ENCODE measurements at regions of chr7 and their contacts with region 1.

Region 1: GRCh38 chr7:112495810-112496462 is 15.1 kb downstream of the LSMEM1 start:
- DNase-seq: no peak
- H3K4me3 ChIP-seq: no peak overlapping the region
- CTCF ChIP-seq: peak; percentile 49

Region 2: GRCh38 chr7:111741811-111742240 is 754.1 kb before region 1 on chr7:
- CTCF ChIA-PET with region 1: interaction called, 50 read pairs
- POLR2A ChIA-PET with region 1: no interaction called
- DNase-seq: no peak
- H3K4me3 ChIP-seq: no peak overlapping the region
- CTCF ChIP-seq: peak; percentile 62

Region 3: DNA sequence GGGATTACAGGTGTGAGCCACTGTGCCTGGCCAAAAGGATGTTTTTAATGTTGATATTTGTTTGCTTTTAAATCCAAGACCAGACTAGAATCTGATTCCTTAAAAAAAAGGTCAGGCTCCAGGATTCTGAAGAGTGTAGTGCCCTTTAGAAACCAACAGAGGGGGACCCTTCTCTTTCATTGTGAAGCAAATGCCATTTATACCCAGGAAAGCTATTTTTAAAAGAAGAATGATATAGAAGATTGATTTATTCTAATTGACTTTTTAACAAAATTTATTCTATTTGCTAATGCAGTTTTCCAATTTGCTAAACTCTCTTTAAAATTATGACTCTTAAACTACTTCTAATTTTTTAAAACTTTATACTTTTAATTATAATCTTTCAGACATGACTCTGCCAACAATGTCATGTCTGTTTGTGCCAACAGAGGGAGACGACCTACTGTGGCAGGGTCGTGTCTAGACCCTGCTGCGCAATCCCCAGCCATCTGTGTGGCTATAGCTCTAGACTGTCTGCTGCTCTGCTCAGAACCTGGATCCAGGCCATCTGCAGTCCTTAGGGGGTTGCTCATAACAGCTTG is 732.6 kb before region 1 on chr7:
- CTCF ChIA-PET with region 1: interaction called, 17 read pairs
- POLR2A ChIA-PET with region 1: no interaction called
- DNase-seq: no peak
- H3K4me3 ChIP-seq: no peak overlapping the region
- CTCF ChIP-seq: peak; percentile 68

Region 4: GRCh38 chr7:112462236-112462635 is 33.7 kb before region 1 on chr7:
- CTCF ChIA-PET with region 1: interaction called, 10 read pairs
- POLR2A ChIA-PET with region 1: no interaction called
- DNase-seq: no peak
- H3K4me3 ChIP-seq: no peak overlapping the region
- CTCF ChIP-seq: no peak

Region 5: DNA sequence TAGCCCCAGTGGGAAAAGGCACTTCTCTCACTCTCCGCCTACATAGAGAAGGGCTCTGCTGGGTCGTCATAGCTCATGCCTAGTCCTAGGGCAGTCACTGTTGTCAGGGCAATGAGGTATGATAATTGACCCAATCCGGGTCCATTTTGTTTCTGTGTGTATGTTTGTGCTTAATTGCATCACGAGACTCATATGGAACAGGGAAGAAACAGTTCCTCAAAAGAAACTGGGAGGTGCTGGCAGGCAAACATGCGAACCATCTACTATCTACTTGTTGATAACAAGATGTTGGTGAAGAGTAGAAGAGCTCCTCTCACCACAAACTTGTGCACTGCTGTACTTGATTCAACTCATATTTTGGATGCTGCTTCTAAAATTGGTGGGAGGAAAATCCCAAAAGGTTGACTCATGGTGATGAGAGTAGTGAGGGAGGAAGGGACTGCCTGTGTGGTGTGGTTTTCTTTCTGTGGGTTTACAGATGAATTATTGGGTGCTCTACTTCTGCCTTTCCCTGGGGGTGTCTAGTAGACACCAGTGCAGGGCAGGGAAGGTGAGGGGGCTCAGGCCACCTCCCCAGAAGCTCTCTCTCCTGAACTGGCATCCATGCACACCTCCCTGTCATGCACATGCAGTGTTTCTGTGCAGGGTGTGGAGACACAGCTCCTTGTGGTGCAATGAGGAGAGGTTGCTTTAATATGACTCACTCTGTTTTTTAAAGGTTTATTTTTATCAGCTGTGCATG is 14.2 kb after region 1 on chr7:
- CTCF ChIA-PET with region 1: interaction called, 13 read pairs
- POLR2A ChIA-PET with region 1: no interaction called
- DNase-seq: peak; percentile 34
- H3K4me3 ChIP-seq: no peak overlapping the region
- CTCF ChIP-seq: no peak

Region 6: DNA sequence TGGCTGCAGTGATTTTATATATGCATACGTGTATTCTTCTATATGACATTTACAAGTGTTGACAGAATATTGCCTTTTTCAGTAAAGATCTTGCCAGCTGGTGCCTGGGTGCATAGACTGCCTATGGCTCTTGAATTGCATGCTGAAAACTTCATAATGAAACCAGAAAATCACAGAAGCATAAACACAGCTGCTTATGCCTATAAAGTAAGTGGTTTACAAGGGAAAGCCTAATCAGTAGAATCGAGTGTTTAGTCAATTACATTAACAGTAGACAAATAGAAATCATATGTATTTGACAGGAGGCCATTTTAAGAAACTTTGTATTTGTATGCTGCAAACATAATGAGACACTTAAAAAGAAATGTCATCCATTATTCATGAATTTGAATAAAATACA is 211.7 kb after region 1 on chr7:
- CTCF ChIA-PET with region 1: no interaction called
- POLR2A ChIA-PET with region 1: no interaction called
- DNase-seq: no peak
- H3K4me3 ChIP-seq: no peak overlapping the region
- CTCF ChIP-seq: no peak